GM18951 (cell line): ENCODE measurements at regions of chr3 and their contacts with region 1.

Region 1: DNA sequence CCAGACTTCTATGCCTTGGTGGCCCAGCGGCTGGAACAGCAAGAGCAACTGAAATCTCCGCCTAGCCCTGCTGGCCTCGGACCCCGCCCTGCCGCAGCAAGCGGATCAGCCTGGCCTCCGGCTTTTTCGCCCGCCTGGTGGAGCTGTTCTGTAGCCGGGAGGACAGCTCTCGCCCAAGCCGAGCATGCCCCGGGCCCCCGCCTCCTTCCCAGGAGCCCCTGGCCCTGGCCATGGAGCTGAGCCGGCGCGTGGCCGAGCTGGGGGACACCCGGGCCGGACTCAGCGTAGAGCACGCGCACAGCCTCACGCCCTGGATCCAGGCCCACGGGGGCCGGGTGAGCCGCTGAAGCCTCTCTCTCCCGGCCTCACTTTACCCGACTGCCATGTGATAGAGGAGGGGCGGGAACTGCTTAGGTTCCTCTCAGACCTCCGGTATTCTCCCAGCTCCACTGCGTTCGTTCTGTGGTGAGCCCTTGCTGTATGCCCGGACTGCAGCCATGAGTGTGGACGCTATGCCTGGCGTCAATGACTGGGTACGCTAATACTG is 24.1 kb upstream of the MRPL3 start:
- POLR2A ChIP-seq: no peak

Region 2: GRCh38 chr3:131432441-131432840 is 94.4 kb before region 1 on chr3:
- in situ Hi-C with region 1: no loop called
- POLR2A ChIP-seq: no peak

Region 3: GRCh38 chr3:131840156-131840797 is 313.4 kb after region 1 on chr3:
- in situ Hi-C with region 1: no loop called
- POLR2A ChIP-seq: no peak

Region 4: GRCh38 chr3:132006605-132007204 is 479.8 kb after region 1 on chr3:
- in situ Hi-C with region 1: loop called (anchors 25 kb)
- POLR2A ChIP-seq: no peak

Region 5: GRCh38 chr3:132180337-132180791 is 653.5 kb after region 1 on chr3:
- in situ Hi-C with region 1: loop called (anchors 25 kb)
- POLR2A ChIP-seq: no peak